Left ventricle myocardium superior (tissue), 1 donor: ENCODE measurements at regions of chr14 and their contacts with region 1.

Region 1: GRCh38 chr14:90399541-90400444 is 3.0 kb downstream of the CALM1 start:
- DNase-seq: peak; percentile 92
- ATAC-seq: peak; percentile 71

Region 2: DNA sequence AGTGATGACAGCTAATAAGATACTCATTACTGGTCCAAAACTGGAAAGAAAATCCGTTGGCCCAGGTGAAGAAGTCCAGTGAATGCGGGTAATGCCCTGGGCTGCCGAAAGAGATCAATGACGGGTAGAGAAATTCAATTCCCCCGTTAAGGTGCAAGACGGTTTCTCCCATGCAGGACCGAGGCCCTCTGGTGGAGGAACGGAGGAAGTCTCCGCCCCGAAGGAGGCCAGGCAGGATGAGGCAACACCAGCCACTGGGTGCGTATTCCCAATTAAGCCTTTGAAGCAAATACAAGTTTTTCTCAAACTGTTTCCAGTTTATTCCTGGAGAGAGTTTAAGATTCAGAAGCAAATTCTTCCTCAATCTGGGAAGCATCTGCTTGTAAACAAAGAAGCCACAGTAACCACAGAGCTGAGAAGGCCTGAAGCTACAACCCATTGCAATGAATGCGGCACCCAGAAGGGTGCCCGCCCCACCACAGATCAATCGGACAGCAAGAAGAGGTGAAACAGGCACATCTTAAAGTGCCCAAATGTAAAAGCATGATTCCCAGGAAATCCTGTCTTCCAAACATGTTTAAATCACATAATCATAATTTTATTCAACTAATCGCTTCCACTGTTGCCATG is 297.9 kb after region 1 on chr14:
- intact Hi-C with region 1: loop called (anchors 2 kb)
- DNase-seq: peak; percentile 87
- ATAC-seq: peak; percentile 92